ENCODE measurements at regions of chr11 and their contacts with region 1.

Region 1: GRCh38 chr11:75450826-75451821 is 18.1 kb upstream of the KLHL35 start:
- DNase-seq: peak; percentile 60
- ATAC-seq: no peak
- H3K4me3 Mint-ChIP-seq: no peak overlapping the region
- H3K27ac Mint-ChIP-seq: no peak overlapping the region
- H3K4me1 Mint-ChIP-seq: no peaks in the 10 kb centered on the region
- H3K27me3 Mint-ChIP-seq: no peaks in the 10 kb centered on the region
- CTCF ChIP-seq: peak; percentile 80

Region 2: DNA sequence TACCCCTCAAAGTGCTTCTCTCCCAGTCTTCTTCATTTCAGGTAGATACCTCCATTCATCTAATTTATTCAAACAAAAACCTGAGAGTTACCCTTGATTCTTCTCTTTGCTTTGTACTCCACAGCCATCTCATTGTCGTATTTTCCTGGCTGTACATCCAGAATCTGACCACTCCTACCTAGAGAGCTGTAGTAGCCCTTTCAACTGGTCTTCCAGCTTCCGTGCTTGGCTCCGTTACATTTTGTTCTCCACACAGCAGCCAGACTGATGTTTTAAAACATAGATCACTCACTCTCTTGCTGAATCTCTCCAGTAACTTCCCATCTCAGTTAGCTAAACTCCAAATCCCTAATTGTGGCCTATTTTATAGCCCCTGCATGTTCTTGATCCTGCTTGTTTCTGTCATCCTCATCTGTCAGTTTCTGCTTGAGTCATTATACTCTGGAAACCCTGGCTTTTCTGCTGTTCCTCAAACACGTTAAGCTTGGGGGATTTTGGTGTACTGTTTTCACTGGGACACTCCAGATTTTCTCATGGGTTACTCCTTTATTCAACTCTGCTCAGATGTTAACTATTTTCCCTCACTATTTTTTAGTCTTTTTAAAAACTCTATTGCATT is 494.6 kb before region 1 on chr11:
- CTCF ChIA-PET with region 1: no interaction called
- POLR2A ChIA-PET with region 1: no interaction called
- intact Hi-C with region 1: no loop called
- DNase-seq: no peak
- ATAC-seq: no peak
- H3K4me3 Mint-ChIP-seq: no peak overlapping the region
- H3K27ac Mint-ChIP-seq: no peak overlapping the region
- H3K4me1 Mint-ChIP-seq: peaks cover 68% of the 10 kb centered on the region
- H3K27me3 Mint-ChIP-seq: no peaks in the 10 kb centered on the region
- CTCF ChIP-seq: no peak

Region 3: GRCh38 chr11:75525596-75526541 is 74.7 kb after region 1 on chr11 and contains the start of gene GDPD5:
- CTCF ChIA-PET with region 1: interaction called, 130 read pairs
- POLR2A ChIA-PET with region 1: no interaction called
- intact Hi-C with region 1: no loop called
- DNase-seq: peak; percentile 87
- ATAC-seq: peak; percentile 97
- H3K4me3 Mint-ChIP-seq: peak within 1 kb of the TSS; percentile 74
- H3K27ac Mint-ChIP-seq: peak within 1 kb of the TSS; percentile 14
- H3K4me1 Mint-ChIP-seq: peaks cover 20% of the 10 kb centered on the region
- H3K27me3 Mint-ChIP-seq: peaks cover 5% of the 10 kb centered on the region
- CTCF ChIP-seq: peak; percentile 28
- total RNA-seq, gene GDPD5: 7.8 to 11.0 TPM

Measured in activated CD8-positive, alpha-beta T cell treated with anti-CD3 and anti-CD28 coated beads for 36 hours (primary cell).